ENCODE measurements at regions of chr18 and their contacts with region 1.

Region 1: GRCh38 chr18:13375302-13376255 is 157.0 kb downstream of the LDLRAD4 start:
- DNase-seq: peak; percentile 83

Region 2: DNA sequence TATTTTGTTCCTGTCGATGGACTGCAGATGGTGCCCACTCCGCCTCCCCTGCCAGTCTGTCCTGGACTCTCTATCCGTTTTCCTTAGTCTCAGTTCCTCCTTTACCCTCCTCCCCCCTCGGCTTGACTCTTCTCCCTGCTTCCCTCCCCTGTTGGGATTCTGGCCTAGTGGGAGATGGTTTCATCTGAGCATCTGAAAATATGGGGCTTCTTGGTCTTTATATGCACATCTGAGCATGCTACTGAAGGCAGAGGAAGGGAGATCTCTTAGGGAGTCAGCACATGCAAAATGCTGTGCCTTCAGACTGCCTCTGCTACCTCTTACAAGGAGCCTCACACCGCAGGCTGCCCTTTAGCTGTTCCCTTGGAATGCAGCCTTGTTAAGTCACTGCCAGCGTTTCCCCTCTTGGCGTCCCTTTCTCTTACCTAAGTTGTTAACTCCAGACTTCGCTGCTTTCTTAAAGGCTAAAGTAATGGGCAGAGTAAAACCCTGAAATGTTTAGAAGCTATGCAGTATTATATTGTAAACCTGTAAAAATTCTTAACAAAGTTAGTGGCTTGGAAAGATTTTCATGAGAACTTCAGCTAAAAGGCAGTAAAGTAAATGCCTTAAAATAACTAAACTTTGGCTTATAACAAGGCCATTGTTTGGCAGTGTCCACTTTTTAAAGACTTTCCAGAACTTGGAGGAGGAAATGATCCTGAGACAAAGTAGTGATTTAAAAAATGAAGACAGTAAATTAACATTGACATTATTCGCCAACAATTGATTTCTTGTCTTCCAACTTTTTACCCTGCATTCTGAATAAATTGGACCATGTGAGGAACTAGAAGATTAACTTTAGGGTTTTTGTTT is 107.2 kb before region 1 on chr18:
- intact Hi-C with region 1: loop called (anchors 5 kb)
- DNase-seq: no peak

Region 3: DNA sequence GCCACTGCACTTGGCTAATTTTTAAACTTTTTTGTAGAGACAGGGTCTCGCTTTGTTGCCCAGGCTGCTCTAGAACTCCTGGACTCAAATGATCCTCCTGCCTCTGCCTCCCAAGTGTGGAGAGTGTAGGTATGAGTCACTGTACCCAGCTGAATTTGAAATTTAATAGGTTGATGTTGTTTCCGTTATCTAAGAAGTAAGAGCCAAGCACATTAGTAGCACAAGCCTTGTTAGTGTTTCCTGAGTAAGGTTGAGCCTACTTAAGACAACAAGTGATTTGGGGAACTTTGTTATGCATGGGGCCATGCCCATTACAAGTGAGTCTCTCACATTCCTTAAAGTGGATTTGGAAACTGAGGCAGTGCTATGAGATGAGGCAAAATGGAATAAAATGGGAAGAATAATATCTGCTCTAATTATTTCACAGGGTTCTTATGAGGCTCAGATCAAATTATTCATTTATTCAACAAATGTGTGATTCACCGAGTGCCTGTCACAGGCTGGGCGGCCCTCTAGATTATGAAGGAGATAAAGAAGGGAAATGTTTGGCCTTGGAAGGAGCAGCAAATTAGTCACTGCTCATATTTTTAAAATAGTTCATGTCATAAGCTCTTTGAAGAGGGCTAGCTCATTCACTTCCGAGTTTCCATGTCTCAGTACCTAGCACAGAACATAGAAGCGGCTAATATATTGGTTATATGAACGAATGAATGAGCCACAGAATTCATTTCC is 60.2 kb after region 1 on chr18:
- intact Hi-C with region 1: loop called (anchors 5 kb)
- DNase-seq: no peak

Region 4: GRCh38 chr18:13525381-13526029 is 149.9 kb after region 1 on chr18:
- intact Hi-C with region 1: loop called (anchors 5 kb)
- DNase-seq: no peak